H1 (cell line): ENCODE measurements at regions of chr11 and their contacts with region 1.

Region 1: GRCh38 chr11:116132273-116132978 is 628.2 kb upstream of the CADM1 start:
- DNase-seq: peak in 1 of 2 experiments; percentile 36
- H3K4me3 ChIP-seq: no peak overlapping the region
- H3K27ac ChIP-seq: no peak overlapping the region
- H3K4me1 ChIP-seq: peaks cover 0 to 2% (median 0%) of the 10 kb centered on the region in 4 experiments; a peak in 2 of 7 replicates
- H3K27me3 ChIP-seq: no peaks in the 10 kb centered on the region; a peak in 1 of 7 replicates
- CTCF ChIP-seq: no peak
- EP300 ChIP-seq: no peak
- POLR2A ChIP-seq: no peak
- RAD21 ChIP-seq: no peak

Region 2: DNA sequence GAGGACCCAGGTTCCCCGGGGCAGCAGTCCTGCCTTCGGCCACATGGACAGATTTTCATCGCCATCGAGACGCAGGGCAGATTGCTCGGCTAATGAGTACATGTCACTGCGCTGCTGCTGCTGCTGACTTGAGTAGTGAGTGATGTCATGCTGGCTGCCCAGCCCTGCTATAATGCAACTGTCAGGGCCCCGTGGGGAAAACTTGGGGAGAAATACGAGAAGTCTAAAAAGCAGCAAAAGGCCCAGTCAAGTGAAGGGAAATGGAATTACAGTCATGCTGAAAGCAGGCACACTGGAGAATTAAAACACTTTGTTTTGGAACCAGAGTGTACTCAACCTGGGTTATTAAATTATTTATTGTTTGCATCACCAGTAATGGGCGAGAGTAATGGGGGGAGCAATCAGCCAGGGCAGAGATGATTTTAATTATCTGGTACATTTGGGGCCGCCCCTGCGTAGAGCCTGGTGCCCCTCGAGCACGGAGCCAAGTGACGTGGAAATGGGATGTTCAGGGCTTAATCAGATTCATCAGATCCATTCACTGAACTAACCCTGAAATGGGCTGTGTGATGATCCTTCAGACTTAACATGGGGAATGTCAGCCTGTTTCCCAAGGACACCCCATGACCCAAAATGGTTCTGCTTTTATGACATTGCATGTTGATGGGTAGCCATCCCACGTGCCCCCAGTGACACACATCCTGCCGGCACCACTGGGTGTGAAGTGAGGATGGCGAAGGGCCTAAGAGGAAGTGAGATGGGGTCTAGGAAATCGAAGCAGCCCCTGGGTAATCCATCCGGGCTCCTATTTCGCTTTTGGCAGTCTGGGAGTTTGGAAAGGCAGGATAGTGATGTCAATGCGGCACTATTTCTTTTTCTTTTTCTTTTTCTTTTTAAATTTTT is 386.6 kb before region 1 on chr11:
- CTCF ChIA-PET with region 1: no interaction called
- POLR2A ChIA-PET with region 1: no interaction called
- DNase-seq: no peak
- H3K4me3 ChIP-seq: no peak overlapping the region
- H3K27ac ChIP-seq: no peak overlapping the region
- H3K4me1 ChIP-seq: peaks cover 0 to 10% (median 4%) of the 10 kb centered on the region in 4 experiments; a peak in 5 of 7 replicates
- H3K27me3 ChIP-seq: peaks cover 0 to 5% (median 0%) of the 10 kb centered on the region in 4 experiments; a peak in 3 of 7 replicates
- CTCF ChIP-seq: no peak
- EP300 ChIP-seq: no peak
- POLR2A ChIP-seq: no peak
- RAD21 ChIP-seq: no peak

Region 3: DNA sequence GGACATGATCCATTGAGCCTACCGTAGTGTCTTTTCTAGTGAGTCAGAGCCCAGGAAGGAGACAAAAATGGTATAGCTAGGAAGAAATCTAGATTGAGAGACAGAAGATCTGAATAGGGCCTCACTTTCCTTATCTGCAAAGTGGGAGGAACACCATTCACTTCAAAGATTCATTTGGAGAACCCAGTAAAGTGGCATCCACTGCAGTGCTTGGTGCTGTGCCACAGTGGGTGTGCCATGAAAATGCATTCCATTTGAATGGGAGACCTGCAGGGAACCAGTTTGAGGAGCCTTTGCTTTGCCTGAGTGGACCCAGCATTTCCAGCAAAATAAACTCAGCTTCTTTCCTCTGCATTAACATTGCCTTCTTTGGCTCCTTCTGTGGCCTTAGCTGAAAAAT is 157.7 kb before region 1 on chr11:
- CTCF ChIA-PET with region 1: no interaction called
- POLR2A ChIA-PET with region 1: no interaction called
- DNase-seq: no peak
- H3K4me3 ChIP-seq: peak overlapping the region in 3 of 4 experiments; percentile 28 to 52 (median 33); a peak in 4 of 8 replicates
- H3K27ac ChIP-seq: no peak overlapping the region
- H3K4me1 ChIP-seq: peaks cover 2 to 15% (median 8%) of the 10 kb centered on the region in 4 experiments; a peak in 5 of 7 replicates
- H3K27me3 ChIP-seq: peaks cover 8 to 30% (median 23%) of the 10 kb centered on the region in 4 experiments
- CTCF ChIP-seq: no peak
- EP300 ChIP-seq: no peak
- POLR2A ChIP-seq: no peak
- RAD21 ChIP-seq: no peak

Region 4: DNA sequence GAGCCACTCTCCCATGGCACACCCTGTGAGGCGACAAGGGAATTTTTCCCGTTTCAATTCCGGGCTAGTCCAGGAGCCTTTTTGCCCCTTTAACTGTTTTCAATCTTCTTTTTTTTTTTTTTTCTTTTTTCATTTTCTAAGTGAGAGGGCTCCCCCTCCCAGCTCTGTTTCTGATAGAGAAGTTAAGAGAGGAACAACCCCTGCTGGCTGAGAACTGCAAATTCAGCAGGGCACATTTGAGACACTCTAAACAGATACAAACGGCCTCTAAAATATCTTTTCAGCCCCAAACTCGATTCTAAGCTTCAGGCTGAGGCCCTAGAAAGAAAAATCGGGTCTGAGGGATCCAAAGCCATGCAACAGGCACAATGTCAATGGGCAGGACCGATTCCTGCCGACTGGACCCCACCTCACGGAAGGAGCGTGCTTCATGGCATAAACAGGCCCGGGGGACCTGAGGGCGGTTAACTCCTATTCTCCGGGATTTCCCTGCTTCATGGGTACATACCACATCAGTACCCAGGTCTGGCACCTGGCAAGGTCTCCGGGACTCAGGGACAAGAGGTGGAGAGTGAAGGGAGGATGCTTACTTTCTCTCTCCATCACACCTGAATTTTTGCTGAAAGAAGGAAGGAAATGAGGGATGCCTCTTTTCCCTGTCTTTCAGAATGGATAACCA is 12.9 kb after region 1 on chr11:
- CTCF ChIA-PET with region 1: interaction called, 10 read pairs
- POLR2A ChIA-PET with region 1: no interaction called
- DNase-seq: no peak
- H3K4me3 ChIP-seq: no peak overlapping the region
- H3K27ac ChIP-seq: no peak overlapping the region
- H3K4me1 ChIP-seq: peaks cover 0 to 3% (median 1%) of the 10 kb centered on the region in 4 experiments; a peak in 4 of 7 replicates
- H3K27me3 ChIP-seq: no peaks in the 10 kb centered on the region
- CTCF ChIP-seq: peak in 2 of 3 experiments; percentile 26 to 31; a peak in 2 of 4 replicates
- EP300 ChIP-seq: no peak
- POLR2A ChIP-seq: no peak
- RAD21 ChIP-seq: peak; percentile 28 to 40; a peak in 2 of 4 replicates